ENCODE measurements at regions of chr7 and their contacts with region 1.

Region 1: GRCh38 chr7:24283897-24284698 is at the start of gene NPY:
- DNase-seq: peak; percentile 64
- H3K4me3 ChIP-seq: peak within 1 kb of the TSS; percentile 50
- H3K27ac ChIP-seq: no peak within 1 kb of the TSS
- H3K4me1 ChIP-seq: peaks cover 14% of the 10 kb centered on the region
- H3K27me3 ChIP-seq: no peaks in the 10 kb centered on the region
- CTCF ChIP-seq: no peak
- total RNA-seq, gene NPY: 34.4 and 40.1 TPM in 2 replicates

Region 2: GRCh38 chr7:23863209-23863798 is 420.8 kb before region 1 on chr7:
- CTCF ChIA-PET with region 1: no interaction called
- POLR2A ChIA-PET with region 1: no interaction called
- intact Hi-C with region 1: loop called (anchors 5 kb)
- DNase-seq: peak; percentile 65
- H3K4me3 ChIP-seq: no peak overlapping the region
- H3K27ac ChIP-seq: no peak overlapping the region
- H3K4me1 ChIP-seq: no peaks in the 10 kb centered on the region
- H3K27me3 ChIP-seq: no peaks in the 10 kb centered on the region
- CTCF ChIP-seq: peak; percentile 77

Region 3: DNA sequence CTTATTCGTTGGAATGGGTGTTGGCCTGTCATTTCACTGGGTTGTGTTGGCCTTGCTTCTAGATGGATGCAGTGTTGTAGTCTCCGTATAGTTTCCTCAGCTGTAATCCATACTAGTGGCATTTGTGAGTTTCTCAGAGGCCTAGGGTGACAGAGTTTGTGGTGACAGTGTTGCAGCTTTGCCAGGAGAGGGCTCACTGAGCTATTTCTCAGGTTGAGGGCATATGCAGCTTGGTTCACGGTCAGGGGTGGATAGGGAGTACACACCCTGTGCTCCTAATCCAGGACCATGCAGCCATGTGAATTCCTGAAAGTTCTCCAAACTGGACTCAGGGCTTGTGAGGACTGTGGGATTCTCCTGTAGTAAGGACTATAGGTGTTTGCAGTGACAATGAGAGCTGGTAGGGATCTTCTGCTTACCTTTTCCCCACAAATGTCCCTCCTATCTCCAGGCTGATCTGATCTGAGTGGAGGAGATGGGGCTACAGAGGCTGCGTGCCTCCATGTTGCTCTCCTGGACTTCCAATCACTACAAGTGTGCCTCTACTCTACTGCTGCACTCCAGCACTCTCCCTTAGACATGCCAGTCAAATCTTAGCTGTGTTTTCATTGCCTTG is 345.1 kb before region 1 on chr7:
- CTCF ChIA-PET with region 1: interaction called, 3 read pairs
- POLR2A ChIA-PET with region 1: no interaction called
- intact Hi-C with region 1: loop called (anchors 5 kb)
- DNase-seq: peak; percentile 84
- H3K4me3 ChIP-seq: no peak overlapping the region
- H3K27ac ChIP-seq: no peak overlapping the region
- H3K4me1 ChIP-seq: no peaks in the 10 kb centered on the region
- H3K27me3 ChIP-seq: no peaks in the 10 kb centered on the region
- CTCF ChIP-seq: peak; percentile 83

Region 4: GRCh38 chr7:24075426-24075810 is 208.7 kb before region 1 on chr7:
- CTCF ChIA-PET with region 1: no interaction called
- POLR2A ChIA-PET with region 1: no interaction called
- intact Hi-C with region 1: loop called (anchors 10 kb)
- DNase-seq: peak; percentile 34
- H3K4me3 ChIP-seq: no peak overlapping the region
- H3K27ac ChIP-seq: no peak overlapping the region
- H3K4me1 ChIP-seq: peaks cover 30% of the 10 kb centered on the region
- H3K27me3 ChIP-seq: no peaks in the 10 kb centered on the region
- CTCF ChIP-seq: no peak

Region 5: GRCh38 chr7:24102988-24103387 is 181.1 kb before region 1 on chr7:
- CTCF ChIA-PET with region 1: no interaction called
- POLR2A ChIA-PET with region 1: no interaction called
- intact Hi-C with region 1: no loop called
- DNase-seq: no peak
- H3K4me3 ChIP-seq: no peak overlapping the region
- H3K27ac ChIP-seq: no peak overlapping the region
- H3K4me1 ChIP-seq: no peaks in the 10 kb centered on the region
- H3K27me3 ChIP-seq: no peaks in the 10 kb centered on the region
- CTCF ChIP-seq: no peak

Region 6: DNA sequence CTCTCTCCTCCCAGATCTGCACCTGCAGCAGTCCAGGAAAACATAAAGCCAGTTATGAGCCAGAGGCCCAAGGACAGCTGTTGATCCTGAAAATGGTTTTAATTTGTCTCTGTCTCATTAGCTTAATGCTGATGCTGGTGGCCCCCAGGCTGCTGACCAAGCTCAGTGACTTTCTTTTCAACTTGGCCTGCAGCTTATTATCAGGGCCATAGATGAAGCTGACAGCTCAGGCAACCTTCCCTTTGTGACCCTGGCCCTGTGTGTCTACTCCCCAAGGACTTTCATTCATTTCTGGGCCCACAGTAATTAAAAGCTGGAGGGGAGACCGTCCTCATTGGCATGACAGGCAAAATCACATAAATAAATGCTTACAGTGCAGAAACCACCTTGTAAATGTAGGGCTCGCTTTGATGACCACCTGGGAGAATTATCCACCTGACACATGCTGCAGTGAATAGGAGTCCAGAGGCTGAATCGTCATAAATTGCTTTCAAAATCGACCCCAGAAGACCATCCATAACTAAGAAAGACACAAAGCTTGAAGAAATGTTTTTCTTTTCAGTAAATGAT is 138.4 kb after region 1 on chr7:
- CTCF ChIA-PET with region 1: no interaction called
- POLR2A ChIA-PET with region 1: no interaction called
- intact Hi-C with region 1: no loop called
- DNase-seq: no peak
- H3K4me3 ChIP-seq: no peak overlapping the region
- H3K27ac ChIP-seq: no peak overlapping the region
- H3K4me1 ChIP-seq: no peaks in the 10 kb centered on the region
- H3K27me3 ChIP-seq: no peaks in the 10 kb centered on the region
- CTCF ChIP-seq: no peak

Measured in A673 (cell line).